CD8-positive, alpha-beta T cell (primary cell): ENCODE measurements at regions of chr16 and their contacts with region 1.

Region 1: GRCh38 chr16:3780570-3780969 is 63.2 kb upstream of the TRAP1 start:
- DNase-seq: peak in 3 of 9 experiments; percentile 17 to 56 (median 37)
- ATAC-seq: peak; percentile 71
- H3K4me3 ChIP-seq: no peak overlapping the region
- H3K4me3 Mint-ChIP-seq: no peak overlapping the region
- H3K27ac ChIP-seq: no peak overlapping the region
- H3K27ac Mint-ChIP-seq: peak overlapping the region; percentile 37
- H3K4me1 ChIP-seq: no peaks in the 10 kb centered on the region
- H3K4me1 Mint-ChIP-seq: peaks cover 29% of the 10 kb centered on the region
- H3K27me3 ChIP-seq: no peaks in the 10 kb centered on the region
- H3K27me3 Mint-ChIP-seq: no peaks in the 10 kb centered on the region
- CTCF ChIP-seq: no peak

Region 2: DNA sequence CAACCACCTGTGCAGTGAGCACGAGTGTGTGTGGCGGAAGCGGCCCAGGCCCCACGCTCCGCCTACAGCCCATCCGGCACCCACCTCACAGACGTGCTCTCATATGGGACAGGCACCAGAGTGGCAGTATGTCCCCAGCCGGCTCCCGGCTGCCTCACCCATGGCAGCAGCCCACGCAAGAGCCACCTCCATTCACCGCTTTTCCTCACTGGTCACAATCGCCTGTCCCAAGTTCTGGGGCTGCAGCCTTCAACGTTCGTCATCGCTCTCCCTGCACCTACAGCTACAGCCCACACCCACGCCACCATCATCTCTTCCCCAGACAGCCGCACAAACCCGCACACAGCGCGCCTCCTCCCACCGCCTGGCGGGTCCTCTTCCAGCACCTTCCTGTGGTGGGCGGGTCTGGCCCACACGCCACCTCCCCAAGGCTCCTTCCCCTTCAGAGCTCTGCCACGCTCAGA is 45.8 kb before region 1 on chr16:
- CTCF ChIA-PET with region 1: no interaction called
- POLR2A ChIA-PET with region 1: no interaction called
- intact Hi-C with region 1: no loop called
- DNase-seq: no peak
- ATAC-seq: no peak
- H3K4me3 ChIP-seq: no peak overlapping the region
- H3K4me3 Mint-ChIP-seq: no peak overlapping the region
- H3K27ac ChIP-seq: no peak overlapping the region
- H3K27ac Mint-ChIP-seq: no peak overlapping the region
- H3K4me1 ChIP-seq: no peaks in the 10 kb centered on the region
- H3K4me1 Mint-ChIP-seq: no peaks in the 10 kb centered on the region
- H3K27me3 ChIP-seq: no peaks in the 10 kb centered on the region
- H3K27me3 Mint-ChIP-seq: no peaks in the 10 kb centered on the region
- CTCF ChIP-seq: no peak

Region 3: GRCh38 chr16:3745751-3746355 is 34.7 kb before region 1 on chr16:
- CTCF ChIA-PET with region 1: interaction called, 3 read pairs
- POLR2A ChIA-PET with region 1: no interaction called
- intact Hi-C with region 1: loop called in 1 of 2 experiments (anchors 1 kb)
- DNase-seq: no peak
- ATAC-seq: no peak
- H3K4me3 ChIP-seq: no peak overlapping the region
- H3K4me3 Mint-ChIP-seq: no peak overlapping the region
- H3K27ac ChIP-seq: no peak overlapping the region
- H3K27ac Mint-ChIP-seq: no peak overlapping the region
- H3K4me1 ChIP-seq: no peaks in the 10 kb centered on the region
- H3K4me1 Mint-ChIP-seq: peaks cover 7% of the 10 kb centered on the region
- H3K27me3 ChIP-seq: no peaks in the 10 kb centered on the region
- H3K27me3 Mint-ChIP-seq: no peaks in the 10 kb centered on the region
- CTCF ChIP-seq: no peak

Region 4: DNA sequence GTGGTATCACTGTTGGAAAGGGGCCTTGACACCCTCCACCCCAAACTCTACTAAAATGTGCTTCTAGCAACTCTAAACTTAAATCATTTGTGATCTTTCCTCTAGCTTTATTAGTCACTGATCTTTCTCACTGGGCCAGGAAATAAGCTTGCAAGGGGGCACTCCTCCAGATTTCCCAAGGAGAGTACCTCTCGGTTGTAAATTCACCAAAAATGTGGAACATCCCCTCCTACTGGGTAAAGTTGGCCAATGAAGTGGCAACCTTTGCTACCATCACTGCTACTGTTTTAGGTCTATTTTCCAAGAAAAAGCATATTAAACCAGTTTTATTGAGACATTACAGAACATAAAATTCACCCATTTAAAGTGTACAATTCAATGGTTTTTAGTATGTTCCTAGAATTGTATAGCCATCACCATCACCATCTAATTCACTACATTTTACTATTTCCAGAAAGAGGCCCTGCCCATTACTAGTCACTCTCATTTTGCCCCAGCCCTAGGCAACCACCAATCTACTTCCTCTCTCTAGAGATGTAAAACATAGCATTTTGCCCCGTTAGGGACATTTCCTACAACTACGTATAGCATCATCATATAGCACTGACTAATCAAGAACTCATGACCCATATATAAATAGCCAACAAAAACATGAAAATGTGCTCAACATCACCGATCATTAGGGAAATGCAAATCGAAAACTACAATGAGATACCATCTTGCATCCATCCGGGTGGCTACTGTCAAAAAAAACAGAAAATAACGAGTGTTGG is 380.3 kb after region 1 on chr16:
- CTCF ChIA-PET with region 1: no interaction called
- POLR2A ChIA-PET with region 1: no interaction called
- intact Hi-C with region 1: no loop called
- DNase-seq: no peak
- ATAC-seq: no peak
- H3K4me3 ChIP-seq: no peak overlapping the region
- H3K4me3 Mint-ChIP-seq: no peak overlapping the region
- H3K27ac ChIP-seq: no peak overlapping the region
- H3K27ac Mint-ChIP-seq: no peak overlapping the region
- H3K4me1 ChIP-seq: no peaks in the 10 kb centered on the region
- H3K4me1 Mint-ChIP-seq: no peaks in the 10 kb centered on the region
- H3K27me3 ChIP-seq: no peaks in the 10 kb centered on the region
- H3K27me3 Mint-ChIP-seq: no peaks in the 10 kb centered on the region
- CTCF ChIP-seq: no peak